ENCODE measurements at regions of chr12 and their contacts with region 1.

Region 1: GRCh38 chr12:51970904-51971646 is 19.6 kb downstream of the ACVR1B start:
- DNase-seq: peak; percentile 63
- ATAC-seq: peak; percentile 95
- H3K4me3 Mint-ChIP-seq: no peak overlapping the region
- H3K27ac Mint-ChIP-seq: peak overlapping the region; percentile 52; the same call in 1 of the 2 replicates
- H3K4me1 Mint-ChIP-seq: peaks cover 32% of the 10 kb centered on the region
- H3K27me3 Mint-ChIP-seq: no peaks in the 10 kb centered on the region
- CTCF ChIP-seq: peak; percentile 82

Region 2: DNA sequence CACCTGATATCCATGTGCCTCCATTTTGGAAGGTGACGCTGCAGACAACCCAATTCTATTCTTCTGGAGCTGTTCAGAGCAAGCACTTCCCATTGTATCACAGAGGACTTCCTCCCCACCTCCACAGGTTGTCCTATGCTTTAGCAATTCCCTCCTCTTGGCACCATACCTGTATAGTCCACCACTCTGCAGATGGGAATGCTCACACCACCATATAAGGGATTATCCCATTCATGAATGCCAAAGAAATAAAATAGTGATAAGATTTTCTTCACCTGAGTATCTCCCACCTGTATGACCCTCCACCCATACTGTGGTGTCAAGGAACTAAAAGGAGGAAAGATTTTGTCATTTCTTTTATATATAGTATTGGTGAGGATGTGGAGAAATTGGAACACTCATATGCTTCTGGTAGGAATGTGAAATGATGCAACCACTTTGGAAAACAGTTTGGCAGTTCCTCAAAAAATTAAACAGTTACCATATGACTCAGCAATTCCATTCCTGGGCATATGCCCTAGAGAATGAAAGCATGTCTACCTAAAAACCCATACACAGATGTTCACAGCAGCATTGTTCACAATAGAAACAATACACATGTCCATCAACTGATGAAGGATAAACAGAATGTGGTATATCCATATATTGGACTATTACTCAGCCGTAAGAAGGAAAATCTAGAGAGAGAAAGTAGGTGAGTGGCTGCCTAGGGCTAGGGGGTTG is 197.8 kb before region 1 on chr12:
- CTCF ChIA-PET with region 1: no interaction called
- POLR2A ChIA-PET with region 1: no interaction called
- DNase-seq: no peak
- ATAC-seq: no peak
- H3K4me3 Mint-ChIP-seq: no peak overlapping the region
- H3K27ac Mint-ChIP-seq: no peak overlapping the region
- H3K4me1 Mint-ChIP-seq: no peaks in the 10 kb centered on the region
- H3K27me3 Mint-ChIP-seq: no peaks in the 10 kb centered on the region
- CTCF ChIP-seq: no peak

Region 3: GRCh38 chr12:51959211-51959610 is 11.9 kb before region 1 on chr12:
- CTCF ChIA-PET with region 1: interaction called, 19 read pairs
- POLR2A ChIA-PET with region 1: no interaction called
- DNase-seq: no peak
- ATAC-seq: no peak
- H3K4me3 Mint-ChIP-seq: no peak overlapping the region
- H3K27ac Mint-ChIP-seq: no peak overlapping the region
- H3K4me1 Mint-ChIP-seq: peaks cover 13% of the 10 kb centered on the region
- H3K27me3 Mint-ChIP-seq: peaks cover 1% of the 10 kb centered on the region
- CTCF ChIP-seq: no peak

Region 4: DNA sequence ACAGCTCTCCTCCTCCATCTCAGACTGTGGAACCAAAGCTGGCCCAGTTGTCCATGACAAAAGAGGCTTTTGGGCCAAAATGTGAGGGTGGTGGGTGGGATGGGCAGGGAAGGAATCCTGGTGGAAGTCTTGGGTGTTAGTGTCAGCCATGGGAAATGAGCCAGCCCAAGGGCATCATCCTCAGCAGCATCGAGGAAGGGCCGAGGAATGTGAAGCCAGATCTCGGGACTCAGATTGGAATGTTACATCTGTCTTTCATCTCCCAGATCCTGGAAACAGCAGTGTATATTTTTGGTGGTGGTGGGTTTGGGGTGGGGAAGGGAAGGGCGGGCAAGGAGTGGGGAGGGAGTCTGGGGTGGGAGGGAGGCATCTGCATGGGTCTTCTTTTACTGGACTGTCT is 23.9 kb after region 1 on chr12:
- CTCF ChIA-PET with region 1: interaction called, 13 read pairs
- POLR2A ChIA-PET with region 1: no interaction called
- DNase-seq: no peak
- ATAC-seq: no peak
- H3K4me3 Mint-ChIP-seq: no peak overlapping the region
- H3K27ac Mint-ChIP-seq: no peak overlapping the region
- H3K4me1 Mint-ChIP-seq: peaks cover 3% of the 10 kb centered on the region
- H3K27me3 Mint-ChIP-seq: no peaks in the 10 kb centered on the region
- CTCF ChIP-seq: no peak

Region 5: DNA sequence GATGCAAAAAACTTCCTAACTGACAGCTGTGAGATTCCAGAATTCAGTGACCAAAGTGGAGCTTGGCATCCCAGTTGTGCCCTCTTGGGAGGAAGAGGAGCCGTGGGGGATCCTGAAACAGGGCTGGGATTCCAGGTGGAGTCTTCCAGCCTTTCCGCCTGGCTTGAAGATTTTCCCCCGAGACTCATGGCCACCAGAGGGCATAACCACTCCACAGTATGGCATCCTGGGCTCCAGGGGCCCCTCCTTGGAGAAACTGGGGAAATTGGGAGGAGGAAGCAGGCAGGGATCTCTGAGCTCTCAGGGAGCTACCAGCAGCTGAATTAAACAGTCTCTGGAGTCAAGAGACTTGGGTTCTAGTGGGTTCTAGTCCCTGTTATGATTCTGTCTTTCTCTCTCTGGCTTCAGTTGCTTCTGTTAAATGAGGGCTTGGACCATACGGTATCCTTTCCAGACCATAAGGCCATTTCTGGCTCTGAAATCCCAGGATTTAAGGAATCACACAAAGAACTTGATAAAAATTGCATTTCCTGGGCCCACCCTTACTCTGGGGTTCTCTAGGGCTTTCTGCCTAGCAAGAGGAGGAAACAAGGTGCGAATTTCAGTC is 33.1 kb after region 1 on chr12:
- CTCF ChIA-PET with region 1: interaction called, 14 read pairs
- POLR2A ChIA-PET with region 1: no interaction called
- DNase-seq: peak; percentile 74
- ATAC-seq: peak; percentile 39
- H3K4me3 Mint-ChIP-seq: no peak overlapping the region
- H3K27ac Mint-ChIP-seq: no peak overlapping the region
- H3K4me1 Mint-ChIP-seq: peaks cover 20% of the 10 kb centered on the region
- H3K27me3 Mint-ChIP-seq: peaks cover 47% of the 10 kb centered on the region
- CTCF ChIP-seq: peak; percentile 42

Region 6: DNA sequence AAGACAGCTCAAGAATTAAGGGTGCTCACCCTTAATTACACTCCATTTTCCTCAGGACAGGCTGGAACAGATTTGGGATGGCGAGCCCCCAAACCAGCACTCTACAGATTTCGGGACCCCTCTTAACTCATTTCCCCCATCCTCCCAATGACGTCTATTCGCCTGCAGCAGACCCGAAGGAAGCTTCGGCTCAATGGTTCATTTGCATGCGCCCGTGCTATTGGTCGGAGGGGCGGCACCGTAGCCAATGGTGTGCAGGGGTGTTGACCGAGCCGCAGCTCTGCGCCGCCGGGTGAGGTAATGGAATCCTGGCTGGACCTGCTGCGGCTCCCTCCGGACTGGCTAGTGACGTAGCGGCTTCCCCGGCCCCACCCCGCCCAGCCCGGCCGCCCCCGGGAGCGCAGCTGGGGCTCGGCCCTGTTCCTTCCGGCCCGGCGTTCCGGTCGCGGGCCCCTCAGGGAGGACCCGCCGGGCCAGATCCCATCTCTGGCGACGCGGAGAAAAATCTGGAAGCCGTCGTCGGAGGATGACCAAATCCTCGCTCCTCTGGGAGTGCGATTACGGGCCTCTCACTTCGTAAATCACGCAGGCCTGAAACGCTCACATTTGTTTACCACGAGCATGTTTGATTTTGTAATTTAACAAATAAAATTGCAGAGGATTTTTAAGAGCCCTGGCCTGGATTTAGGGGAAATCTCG is 61.9 kb after region 1 on chr12:
- CTCF ChIA-PET with region 1: no interaction called
- POLR2A ChIA-PET with region 1: no interaction called
- DNase-seq: peak; percentile 97
- ATAC-seq: peak; percentile 93
- H3K4me3 Mint-ChIP-seq: peak overlapping the region; percentile 69
- H3K27ac Mint-ChIP-seq: peak overlapping the region; percentile 95
- H3K4me1 Mint-ChIP-seq: peaks cover 31% of the 10 kb centered on the region
- H3K27me3 Mint-ChIP-seq: peaks cover 46% of the 10 kb centered on the region
- CTCF ChIP-seq: no peak

Measured in WTC11 (cell line).